Right ventricle myocardium superior (tissue), 1 donor: ENCODE measurements at regions of chr16 and their contacts with region 1.

Region 1: GRCh38 chr16:72066747-72067146 is 3.7 kb downstream of the HPR start:
- DNase-seq: no peak
- ATAC-seq: peak; percentile 82

Region 2: GRCh38 chr16:71328151-71328550 is 738.6 kb before region 1 on chr16:
- intact Hi-C with region 1: no loop called
- DNase-seq: no peak
- ATAC-seq: no peak

Region 3: GRCh38 chr16:72099377-72099818 is 32.7 kb after region 1 on chr16:
- intact Hi-C with region 1: loop called (anchors 2 kb)
- DNase-seq: no peak
- ATAC-seq: peak; percentile 88

Region 4: DNA sequence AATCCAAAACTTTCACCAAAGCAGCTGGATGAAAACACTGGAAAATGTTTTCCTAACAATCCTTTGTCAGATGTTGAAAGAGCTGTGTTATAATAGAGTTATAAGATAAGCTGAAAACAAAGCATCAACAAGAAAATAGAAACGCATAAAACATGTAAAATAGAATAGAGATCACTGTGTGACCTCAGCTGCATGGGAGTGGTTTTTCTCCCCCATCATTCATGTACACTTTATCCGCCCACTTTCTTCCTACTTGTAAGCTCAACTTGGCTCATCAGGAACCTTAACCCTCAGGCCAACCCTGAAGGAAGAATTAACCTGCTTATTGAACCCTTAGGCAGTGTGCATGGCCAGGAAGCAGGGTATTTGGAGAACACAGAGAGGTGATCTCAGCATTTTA is 343.7 kb after region 1 on chr16:
- intact Hi-C with region 1: no loop called
- DNase-seq: no peak
- ATAC-seq: no peak